ENCODE measurements at regions of chr18 and their contacts with region 1.

Region 1: DNA sequence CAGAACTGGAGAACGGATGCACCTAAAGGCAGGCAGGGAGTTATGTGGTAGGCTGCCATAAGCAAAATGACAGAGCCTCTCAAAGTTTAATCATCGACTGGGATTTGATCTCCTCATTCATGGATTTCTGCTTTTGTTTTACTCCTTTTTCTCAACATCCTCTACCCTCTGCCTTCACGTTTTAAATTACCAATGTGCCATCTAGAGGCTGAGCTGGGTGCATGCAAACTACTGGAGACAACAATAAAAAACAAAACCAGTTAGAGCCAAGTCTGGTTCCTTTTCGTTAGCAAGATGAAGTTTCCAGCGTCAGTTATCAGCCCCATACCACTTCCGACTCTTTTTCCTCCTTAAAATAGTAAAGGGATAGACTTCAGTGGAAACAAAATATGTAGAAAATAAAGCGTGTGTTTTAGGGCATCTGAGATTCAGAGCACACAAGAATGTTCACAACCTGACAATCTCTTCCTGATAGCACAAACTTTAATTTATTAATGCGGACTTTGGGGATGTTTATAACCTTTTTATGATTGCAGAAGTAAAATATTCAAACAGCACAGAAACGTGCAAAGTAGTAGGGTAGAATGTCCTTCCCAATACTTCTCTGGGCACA is 117.0 kb downstream of the LAMA1 start:
- DNase-seq: peak; percentile 19
- ATAC-seq: peak; percentile 91
- H3K4me3 ChIP-seq: no peak overlapping the region
- H3K27ac ChIP-seq: no peak overlapping the region
- H3K4me1 ChIP-seq: no peaks in the 10 kb centered on the region
- H3K27me3 ChIP-seq: no peaks in the 10 kb centered on the region
- CTCF ChIP-seq: peak; percentile 50
- POLR2A ChIP-seq: no peak
- RAD21 ChIP-seq: peak; percentile 39

Region 2: DNA sequence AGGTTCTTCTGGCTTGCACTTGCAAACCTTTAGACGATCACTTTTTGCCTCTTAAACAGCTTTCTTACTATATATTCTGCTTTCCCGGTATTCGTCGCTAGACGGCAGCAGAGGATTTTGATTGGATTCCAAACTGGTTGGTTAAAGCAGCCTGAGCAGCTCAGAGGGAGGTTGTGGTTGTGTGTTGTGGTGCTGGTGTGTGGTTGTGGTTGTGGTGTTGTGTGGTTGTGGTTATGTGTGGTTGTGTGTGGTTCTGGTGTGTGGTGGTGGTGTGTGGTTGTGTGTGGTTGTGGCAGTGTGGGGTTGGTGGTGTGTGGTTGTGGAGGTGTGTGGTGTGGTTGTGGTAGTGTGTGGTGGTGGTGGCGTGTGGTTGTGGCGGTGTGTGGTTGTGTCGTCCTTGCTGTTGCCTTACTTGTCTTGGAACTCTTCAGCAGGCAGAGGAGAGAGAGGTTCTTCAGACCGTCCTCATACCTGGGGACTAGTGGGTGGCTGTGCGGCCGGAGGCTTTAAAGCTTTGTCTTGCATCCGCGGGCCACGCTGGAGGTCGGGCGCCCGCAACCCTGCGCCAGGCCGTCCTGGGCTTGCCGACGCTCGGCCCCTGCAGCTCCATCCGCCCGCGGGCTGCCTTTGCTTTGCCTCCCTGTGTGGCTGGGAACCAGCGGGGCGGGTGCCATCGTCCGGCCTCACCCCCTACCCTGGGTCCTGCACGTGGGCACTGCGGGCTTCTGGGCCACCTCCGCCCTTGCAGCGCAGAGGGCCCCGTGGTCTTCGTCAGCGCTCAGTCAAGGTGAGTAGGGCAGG is 80.3 kb before region 1 on chr18:
- CTCF ChIA-PET with region 1: no interaction called
- POLR2A ChIA-PET with region 1: no interaction called
- dilution Hi-C with region 1: no loop called
- in situ Hi-C with region 1: no loop called
- intact Hi-C with region 1: loop called (anchors 1 kb)
- DNase-seq: peak; percentile 68
- ATAC-seq: peak; percentile 85
- H3K4me3 ChIP-seq: no peak overlapping the region
- H3K27ac ChIP-seq: no peak overlapping the region
- H3K4me1 ChIP-seq: no peaks in the 10 kb centered on the region
- H3K27me3 ChIP-seq: no peaks in the 10 kb centered on the region; the same call in 1 of the 2 replicates
- CTCF ChIP-seq: peak; percentile 82
- POLR2A ChIP-seq: no peak
- RAD21 ChIP-seq: peak; percentile 76